PC-3 (cell line): ENCODE measurements at regions of chr7 and their contacts with region 1.

Region 1: GRCh38 chr7:20299647-20300312 is 30.9 kb upstream of the ITGB8 start:
- DNase-seq: no peak
- ATAC-seq: no peak
- H3K4me3 ChIP-seq: no peak overlapping the region
- H3K27ac ChIP-seq: no peak overlapping the region
- H3K4me1 ChIP-seq: peaks cover 34% of the 10 kb centered on the region
- H3K27me3 ChIP-seq: no peaks in the 10 kb centered on the region
- CTCF ChIP-seq: no peak

Region 2: DNA sequence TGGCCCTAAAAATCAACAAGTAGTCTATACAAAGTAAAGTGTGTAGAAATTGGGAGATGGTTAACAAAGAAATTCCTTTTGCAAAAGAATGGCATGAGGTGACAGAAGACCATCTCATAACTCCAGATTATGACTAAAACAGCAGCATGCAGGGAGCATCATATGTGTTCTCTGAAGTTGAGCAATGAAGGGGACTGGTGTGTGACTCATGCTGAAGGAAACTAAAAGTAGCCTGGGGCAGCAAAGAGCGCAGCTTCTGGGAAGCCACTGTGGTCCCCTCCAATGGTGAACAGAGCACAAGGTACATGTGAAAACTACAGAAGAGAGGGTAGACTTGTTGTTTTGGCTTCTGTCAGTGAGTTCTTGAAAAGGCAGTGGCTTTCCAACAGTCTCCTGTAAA is 216.0 kb before region 1 on chr7:
- CTCF ChIA-PET with region 1: no interaction called
- POLR2A ChIA-PET with region 1: no interaction called
- intact Hi-C with region 1: no loop called
- DNase-seq: peak; percentile 83
- ATAC-seq: peak; percentile 88
- H3K4me3 ChIP-seq: no peak overlapping the region
- H3K27ac ChIP-seq: no peak overlapping the region
- H3K4me1 ChIP-seq: peaks cover 4% of the 10 kb centered on the region; the same call in 1 of the 2 replicates
- H3K27me3 ChIP-seq: no peaks in the 10 kb centered on the region
- CTCF ChIP-seq: no peak

Region 3: GRCh38 chr7:20241194-20241910 is 58.4 kb before region 1 on chr7:
- CTCF ChIA-PET with region 1: no interaction called
- POLR2A ChIA-PET with region 1: no interaction called
- intact Hi-C with region 1: loop called (anchors 2 kb)
- DNase-seq: peak; percentile 83
- ATAC-seq: peak; percentile 64
- H3K4me3 ChIP-seq: no peak overlapping the region
- H3K27ac ChIP-seq: peak overlapping the region; percentile 76
- H3K4me1 ChIP-seq: peaks cover 37% of the 10 kb centered on the region
- H3K27me3 ChIP-seq: no peaks in the 10 kb centered on the region
- CTCF ChIP-seq: no peak